PC-3 (cell line): ENCODE measurements at regions of chr1 and their contacts with region 1.

Region 1: DNA sequence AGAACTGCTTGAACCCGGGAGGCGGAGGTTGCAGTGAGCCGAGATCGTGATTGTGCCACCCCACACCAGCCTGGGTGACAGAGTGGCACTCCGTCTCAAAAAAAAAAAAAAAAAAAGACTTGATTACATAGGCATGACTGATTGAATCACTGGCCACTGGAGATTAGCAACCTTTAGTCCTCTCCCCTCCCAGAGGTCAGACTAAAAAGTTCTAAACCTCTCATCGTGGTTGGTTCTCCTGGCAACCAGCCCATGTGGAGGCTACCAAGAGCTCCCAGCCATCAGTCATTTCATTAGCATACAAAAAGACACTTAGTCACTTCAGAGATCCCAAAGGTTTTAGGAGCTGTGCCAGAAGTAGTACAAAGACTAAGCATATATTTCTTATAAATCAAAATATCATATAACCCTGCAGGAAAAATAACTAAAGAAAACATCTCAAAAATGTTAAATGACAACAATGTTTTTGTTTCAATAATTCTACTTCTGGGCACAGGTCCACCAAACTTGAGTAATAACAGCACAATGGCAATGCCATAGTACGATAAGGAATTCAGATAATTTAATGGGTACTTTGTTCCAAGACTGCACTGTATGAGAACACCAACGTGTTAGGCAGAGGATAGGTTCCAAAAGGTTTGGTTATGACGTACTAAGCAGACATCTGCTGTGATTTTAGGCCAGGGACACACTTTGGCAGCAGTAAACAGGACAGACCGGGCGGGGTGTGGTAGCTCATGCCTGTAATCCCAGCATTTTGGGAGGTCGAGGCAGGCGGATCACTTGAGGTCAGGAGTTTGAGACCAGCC is 18.1 kb downstream of the USP48 start:
- DNase-seq: peak; percentile 98
- ATAC-seq: peak; percentile 90
- H3K4me3 ChIP-seq: no peak overlapping the region
- H3K27ac ChIP-seq: peak overlapping the region; percentile 68
- H3K4me1 ChIP-seq: peaks cover 30% of the 10 kb centered on the region
- H3K27me3 ChIP-seq: no peaks in the 10 kb centered on the region
- CTCF ChIP-seq: no peak

Region 2: DNA sequence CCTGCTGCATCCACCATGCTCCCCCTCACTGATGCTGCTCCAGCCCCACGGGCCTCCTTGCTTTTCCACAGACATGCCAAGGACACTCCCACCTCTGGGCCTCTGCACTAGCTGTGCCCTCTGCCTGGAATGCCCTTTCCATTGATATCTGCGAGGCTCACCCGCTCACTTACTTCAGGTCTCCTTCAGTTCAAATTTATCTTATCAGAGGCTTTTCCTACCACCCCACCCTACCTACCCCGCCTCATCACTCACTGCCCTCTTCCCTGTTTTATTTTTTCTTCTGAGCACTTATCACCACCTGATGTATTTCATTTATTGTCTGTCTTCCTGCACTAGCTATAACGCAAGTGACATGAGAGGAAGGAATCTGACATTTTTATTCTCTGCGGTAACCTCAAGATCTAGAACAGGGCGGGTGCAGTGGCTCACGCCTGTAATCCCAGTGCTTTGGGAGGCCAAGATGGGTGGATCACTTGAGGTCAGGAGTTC is 165.3 kb after region 1 on chr1:
- CTCF ChIA-PET with region 1: no interaction called
- POLR2A ChIA-PET with region 1: interaction called, 32 read pairs
- intact Hi-C with region 1: no loop called
- DNase-seq: no peak
- ATAC-seq: no peak
- H3K4me3 ChIP-seq: no peak overlapping the region
- H3K27ac ChIP-seq: no peak overlapping the region
- H3K4me1 ChIP-seq: peaks cover 34% of the 10 kb centered on the region
- H3K27me3 ChIP-seq: no peaks in the 10 kb centered on the region
- CTCF ChIP-seq: no peak